ENCODE measurements at regions of chr17 and their contacts with region 1.

Region 1: DNA sequence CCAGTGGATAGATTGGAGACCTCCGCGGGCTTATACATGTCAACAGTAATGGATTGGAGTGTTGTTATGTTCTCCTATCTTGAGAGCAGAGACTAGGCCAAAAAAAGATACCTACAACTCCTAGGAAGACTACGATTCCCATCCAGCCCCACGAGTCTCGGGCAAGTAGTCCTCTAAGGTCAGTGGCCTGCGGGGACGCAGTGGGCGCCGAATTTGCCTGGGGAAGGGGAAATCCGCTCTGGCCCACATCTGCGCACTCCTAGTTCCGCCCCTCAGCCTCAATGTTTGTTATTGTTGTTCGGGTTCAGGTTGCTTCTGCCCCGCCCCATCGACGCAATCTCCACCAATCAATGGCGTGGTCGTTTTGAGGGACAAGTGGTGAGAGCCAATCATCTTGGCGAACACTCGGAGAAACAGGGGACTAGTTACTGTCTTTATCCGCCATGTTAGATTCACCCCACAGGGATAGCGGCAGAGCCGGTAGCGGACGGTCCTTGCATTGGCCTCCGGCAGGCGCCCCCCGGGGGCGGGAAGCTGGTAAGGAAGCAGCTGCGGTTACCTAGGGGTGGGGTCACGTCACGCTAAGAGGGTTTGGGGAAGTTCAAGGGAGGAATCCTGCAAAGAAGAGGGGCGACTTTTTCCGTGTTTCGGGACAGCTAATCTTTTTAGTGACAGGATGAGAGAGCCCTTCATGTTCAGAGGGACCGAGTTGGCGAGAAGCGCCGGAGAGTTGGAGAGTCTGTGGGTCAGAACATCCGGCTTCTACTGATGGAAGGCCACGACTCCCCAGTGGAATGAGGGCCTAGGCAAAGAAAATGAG is at the start of gene NBR1:
- DNase-seq: peak; percentile 97 to 99 (median 97)
- H3K4me3 ChIP-seq: peak within 1 kb of the TSS; percentile 80 to 85
- H3K4me3 Mint-ChIP-seq: no peak within 1 kb of the TSS
- H3K27ac ChIP-seq: peak within 1 kb of the TSS; percentile 99
- H3K27ac Mint-ChIP-seq: no peak within 1 kb of the TSS
- H3K4me1 ChIP-seq: peaks cover 40% of the 10 kb centered on the region
- H3K4me1 Mint-ChIP-seq: peaks cover 16 to 36% (median 23%) of the 10 kb centered on the region in 4 donors
- H3K27me3 ChIP-seq: no peaks in the 10 kb centered on the region
- H3K27me3 Mint-ChIP-seq: no peaks in the 10 kb centered on the region
- total RNA-seq, gene NBR1: 90.3 to 93.2 TPM

Region 2: GRCh38 chr17:43006639-43007551 is 164.1 kb before region 1 on chr17 and contains the start of gene IFI35:
- CTCF ChIA-PET with region 1: interaction called, 7 read pairs
- POLR2A ChIA-PET with region 1: interaction called, 17 read pairs
- intact Hi-C with region 1: no loop called
- DNase-seq: peak; percentile 81 to 89 (median 83)
- H3K4me3 ChIP-seq: peak within 1 kb of the TSS; percentile 94 to 95
- H3K4me3 Mint-ChIP-seq: peak within 1 kb of the TSS; percentile 100
- H3K27ac ChIP-seq: peak within 1 kb of the TSS; percentile 90
- H3K27ac Mint-ChIP-seq: peak within 1 kb of the TSS; percentile 96 to 100 (median 99)
- H3K4me1 ChIP-seq: peaks cover 21% of the 10 kb centered on the region
- H3K4me1 Mint-ChIP-seq: peaks cover 8 to 26% (median 17%) of the 10 kb centered on the region in 4 donors
- H3K27me3 ChIP-seq: no peaks in the 10 kb centered on the region
- H3K27me3 Mint-ChIP-seq: no peaks in the 10 kb centered on the region
- total RNA-seq, gene IFI35: 33.1 to 40.3 TPM

Region 3: DNA sequence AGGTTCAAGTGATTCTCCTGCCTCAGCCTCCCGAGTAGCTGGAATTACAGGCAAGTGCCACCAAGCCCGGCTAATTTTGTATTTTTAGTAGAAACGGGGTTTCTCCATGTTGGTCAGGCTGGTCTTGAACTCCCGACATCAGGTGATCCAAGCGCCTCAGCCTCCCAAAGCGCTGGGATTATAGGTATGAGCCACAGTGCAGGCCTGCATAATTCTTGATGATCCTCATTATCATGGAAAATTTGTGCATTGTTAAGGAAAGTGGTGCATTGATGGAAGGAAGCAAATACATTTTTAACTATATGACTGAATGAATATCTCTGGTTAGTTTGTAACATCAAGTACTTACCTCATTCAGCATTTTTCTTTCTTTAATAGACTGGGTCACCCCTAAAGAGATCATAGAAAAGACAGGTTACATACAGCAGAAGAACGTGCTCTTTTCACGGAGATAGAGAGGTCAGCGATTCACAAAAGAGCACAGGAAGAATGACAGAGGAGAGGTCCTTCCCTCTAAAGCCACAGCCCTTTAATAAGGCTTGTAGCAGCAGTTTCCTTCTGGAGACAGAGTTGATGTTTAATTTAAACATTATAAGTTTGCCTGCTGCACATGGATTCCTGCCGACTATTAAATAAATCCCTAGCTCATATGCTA is 107.9 kb before region 1 on chr17:
- CTCF ChIA-PET with region 1: no interaction called
- POLR2A ChIA-PET with region 1: no interaction called
- intact Hi-C with region 1: no loop called
- DNase-seq: no peak
- H3K4me3 ChIP-seq: no peak overlapping the region
- H3K4me3 Mint-ChIP-seq: no peak overlapping the region
- H3K27ac ChIP-seq: no peak overlapping the region
- H3K27ac Mint-ChIP-seq: peak overlapping the region in 1 of 7 donors; percentile 57
- H3K4me1 ChIP-seq: no peaks in the 10 kb centered on the region
- H3K4me1 Mint-ChIP-seq: no peaks in the 10 kb centered on the region
- H3K27me3 ChIP-seq: no peaks in the 10 kb centered on the region
- H3K27me3 Mint-ChIP-seq: no peaks in the 10 kb centered on the region

Region 4: GRCh38 chr17:43125133-43125966 is 45.6 kb before region 1 on chr17 and contains the start of gene BRCA1:
- CTCF ChIA-PET with region 1: interaction called, 3 read pairs
- POLR2A ChIA-PET with region 1: interaction called, 14 read pairs
- intact Hi-C with region 1: loop called (anchors 1 kb)
- DNase-seq: peak; percentile 95 to 98 (median 97)
- H3K4me3 ChIP-seq: peak within 1 kb of the TSS; percentile 80 to 89
- H3K4me3 Mint-ChIP-seq: peak within 1 kb of the TSS; percentile 87 to 98 (median 96)
- H3K27ac ChIP-seq: peak within 1 kb of the TSS; percentile 72
- H3K27ac Mint-ChIP-seq: peak within 1 kb of the TSS; percentile 82 to 98 (median 96)
- H3K4me1 ChIP-seq: peaks cover 17% of the 10 kb centered on the region
- H3K4me1 Mint-ChIP-seq: peaks cover 19 to 35% (median 27%) of the 10 kb centered on the region in 4 donors
- H3K27me3 ChIP-seq: no peaks in the 10 kb centered on the region
- H3K27me3 Mint-ChIP-seq: no peaks in the 10 kb centered on the region
- total RNA-seq, gene BRCA1: 4.8 to 6.0 TPM

Region 5: DNA sequence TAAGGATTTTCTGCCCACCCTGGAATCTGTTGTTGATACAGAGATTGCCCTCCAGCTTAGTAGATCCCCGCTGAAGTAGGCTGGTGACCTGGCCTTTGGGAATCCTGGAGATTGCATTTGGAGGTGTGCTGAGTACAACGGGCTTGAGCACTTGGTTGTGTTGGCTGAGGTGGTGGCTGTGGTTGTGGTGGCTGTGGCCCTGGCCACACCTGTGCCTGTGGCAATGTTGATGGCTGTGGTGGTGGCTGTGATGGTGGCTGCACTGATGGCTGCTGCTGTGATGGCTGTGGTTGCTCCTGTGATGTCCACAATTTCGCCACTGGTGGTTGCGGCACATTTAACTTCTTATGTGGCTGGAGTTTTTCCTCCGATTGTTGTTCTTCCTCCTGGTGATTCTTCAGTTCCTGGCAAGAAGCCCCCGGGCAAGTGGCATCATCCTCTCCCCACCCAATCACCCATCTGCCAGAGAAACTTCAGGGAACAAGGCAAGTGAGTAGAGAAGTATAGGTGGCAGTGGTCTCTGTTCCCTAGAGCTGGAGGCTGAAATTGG is 53.2 kb after region 1 on chr17:
- CTCF ChIA-PET with region 1: no interaction called
- POLR2A ChIA-PET with region 1: no interaction called
- intact Hi-C with region 1: no loop called
- DNase-seq: no peak
- H3K4me3 ChIP-seq: no peak overlapping the region
- H3K4me3 Mint-ChIP-seq: no peak overlapping the region
- H3K27ac ChIP-seq: no peak overlapping the region
- H3K27ac Mint-ChIP-seq: peak overlapping the region in 1 of 7 donors; percentile 45
- H3K4me1 ChIP-seq: no peaks in the 10 kb centered on the region
- H3K4me1 Mint-ChIP-seq: peaks cover 0 to 4% (median 1%) of the 10 kb centered on the region in 4 donors
- H3K27me3 ChIP-seq: no peaks in the 10 kb centered on the region
- H3K27me3 Mint-ChIP-seq: no peaks in the 10 kb centered on the region

Region 6: GRCh38 chr17:43338886-43339516 is 168.0 kb after region 1 on chr17:
- CTCF ChIA-PET with region 1: interaction called, 10 read pairs
- POLR2A ChIA-PET with region 1: no interaction called
- intact Hi-C with region 1: no loop called
- DNase-seq: peak; percentile 45 to 63 (median 53)
- H3K4me3 ChIP-seq: no peak overlapping the region
- H3K4me3 Mint-ChIP-seq: no peak overlapping the region
- H3K27ac ChIP-seq: no peak overlapping the region
- H3K27ac Mint-ChIP-seq: no peak overlapping the region
- H3K4me1 ChIP-seq: peaks cover 2% of the 10 kb centered on the region
- H3K4me1 Mint-ChIP-seq: peaks cover 2 to 16% (median 7%) of the 10 kb centered on the region in 4 donors
- H3K27me3 ChIP-seq: no peaks in the 10 kb centered on the region
- H3K27me3 Mint-ChIP-seq: peaks cover 0 to 5% of the 10 kb centered on the region in 2 donors

Region 7: GRCh38 chr17:43388359-43389045 is 217.5 kb after region 1 on chr17:
- CTCF ChIA-PET with region 1: no interaction called
- POLR2A ChIA-PET with region 1: interaction called, 12 read pairs
- intact Hi-C with region 1: loop called (anchors 1 kb)
- DNase-seq: peak; percentile 92 to 95 (median 93)
- H3K4me3 ChIP-seq: peak overlapping the region; percentile 73 to 86
- H3K4me3 Mint-ChIP-seq: peak overlapping the region; percentile 92 to 100 (median 97)
- H3K27ac ChIP-seq: peak overlapping the region; percentile 93
- H3K27ac Mint-ChIP-seq: peak overlapping the region; percentile 97 to 100 (median 98)
- H3K4me1 ChIP-seq: peaks cover 19% of the 10 kb centered on the region
- H3K4me1 Mint-ChIP-seq: peaks cover 12 to 35% (median 27%) of the 10 kb centered on the region in 4 donors
- H3K27me3 ChIP-seq: no peaks in the 10 kb centered on the region
- H3K27me3 Mint-ChIP-seq: no peaks in the 10 kb centered on the region